K562 (cell line): ENCODE measurements at regions of chr14 and their contacts with region 1.

Region 1: DNA sequence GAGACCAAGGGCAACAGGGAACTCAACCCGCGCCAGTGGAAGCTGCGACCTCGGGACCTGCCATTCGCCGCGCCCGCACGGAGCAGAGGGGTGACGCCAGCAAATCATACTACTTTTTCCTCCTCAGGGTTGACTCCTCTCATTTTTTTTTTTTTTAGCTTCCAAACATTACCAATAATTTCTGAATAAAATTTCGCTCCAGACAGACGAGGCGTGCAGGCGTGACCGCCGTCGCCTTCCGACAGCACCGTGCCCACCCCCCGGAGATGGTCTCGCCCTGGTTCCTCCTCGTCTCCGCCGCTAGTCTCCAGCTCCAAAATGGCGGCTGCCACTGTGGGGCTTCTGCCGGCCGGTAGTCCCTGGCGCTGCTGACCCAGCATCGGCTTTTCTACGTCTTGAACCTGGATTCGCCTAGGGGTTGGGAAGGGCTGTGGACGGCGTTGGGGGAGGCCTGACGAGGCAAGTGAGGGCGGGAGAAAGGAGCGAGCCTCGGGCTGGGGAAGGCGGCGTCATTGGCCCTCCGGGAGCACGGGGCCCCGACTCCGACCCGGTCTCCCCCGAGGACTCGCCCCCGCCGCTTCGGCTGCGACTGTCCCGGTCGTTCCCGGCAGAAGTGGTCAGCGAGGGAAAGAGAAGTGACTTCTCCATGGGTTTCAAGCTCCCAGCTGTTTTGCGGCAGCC is at the starts of genes CPSF2 and NDUFB1:
- DNase-seq: peak; percentile 81 to 89 (median 84)
- ATAC-seq: peak; percentile 92
- H3K4me3 ChIP-seq: peak within 1 kb of the TSS; percentile 95
- H3K27ac ChIP-seq: peak within 1 kb of the TSS; percentile 99
- H3K4me1 ChIP-seq: peaks cover 10 to 12% of the 10 kb centered on the region in 2 experiments; a peak in 4 of 5 replicates
- H3K27me3 ChIP-seq: no peaks in the 10 kb centered on the region
- CTCF ChIP-seq: no peak
- EP300 ChIP-seq: no peak
- POLR2A ChIP-seq: peak; percentile 95
- RAD21 ChIP-seq: no peak
- polyA plus RNA-seq, gene CPSF2: 20.8 to 25.9 TPM
- polyA plus RNA-seq, gene NDUFB1: 410 to 431 TPM

Region 2: DNA sequence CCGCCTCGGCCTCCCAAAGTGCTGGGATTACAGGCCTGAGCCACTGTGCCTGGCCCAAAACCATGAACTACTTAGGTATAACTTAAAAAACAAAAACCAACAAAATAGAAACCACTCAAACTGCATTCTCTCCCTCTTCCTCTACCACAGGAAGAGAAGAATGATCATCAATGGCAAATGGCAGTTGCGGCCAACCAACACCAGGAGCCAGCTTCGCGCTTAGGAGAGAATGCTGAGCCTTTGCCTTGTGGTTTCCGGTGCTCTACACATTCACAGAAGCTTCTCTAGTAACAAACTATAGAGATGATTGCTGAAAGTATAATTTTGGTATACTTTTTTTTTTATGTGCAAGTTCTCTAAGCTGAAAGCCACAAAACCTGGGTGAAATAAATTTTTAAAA is 407.0 kb before region 1 on chr14:
- CTCF ChIA-PET with region 1: no interaction called
- POLR2A ChIA-PET with region 1: no interaction called
- in situ Hi-C with region 1: no loop called
- intact Hi-C with region 1: no loop called
- DNase-seq: no peak
- ATAC-seq: no peak
- H3K4me3 ChIP-seq: no peak overlapping the region
- H3K27ac ChIP-seq: no peak overlapping the region
- H3K4me1 ChIP-seq: no peaks in the 10 kb centered on the region
- H3K27me3 ChIP-seq: no peaks in the 10 kb centered on the region
- CTCF ChIP-seq: peak in 2 of 3 experiments; percentile 19 to 28; a peak in 2 of 6 replicates
- EP300 ChIP-seq: no peak
- POLR2A ChIP-seq: no peak
- RAD21 ChIP-seq: peak in 1 of 2 experiments; percentile 32; a peak in 2 of 4 replicates

Region 3: DNA sequence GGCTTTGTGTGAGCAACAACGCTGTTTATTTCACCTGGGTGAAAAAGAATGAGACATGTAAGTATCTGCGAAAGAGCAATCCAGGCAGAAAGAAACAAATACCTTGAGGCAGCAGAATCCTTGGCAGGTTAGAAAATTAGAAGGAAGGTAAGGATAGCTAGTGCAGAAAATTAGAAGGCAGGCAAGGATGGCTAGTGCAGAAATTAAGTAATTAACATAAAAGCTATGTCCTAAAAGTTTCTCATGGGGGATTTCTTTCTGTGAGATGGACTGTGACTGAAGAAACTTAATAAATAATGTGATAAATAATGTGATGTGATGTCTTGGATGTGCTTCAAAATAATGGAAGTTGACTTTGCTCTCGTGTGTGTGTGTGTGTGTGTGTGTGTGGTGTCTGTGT is 72.0 kb before region 1 on chr14:
- CTCF ChIA-PET with region 1: no interaction called
- POLR2A ChIA-PET with region 1: no interaction called
- in situ Hi-C with region 1: no loop called
- intact Hi-C with region 1: no loop called
- DNase-seq: no peak
- ATAC-seq: no peak
- H3K4me3 ChIP-seq: no peak overlapping the region
- H3K27ac ChIP-seq: no peak overlapping the region
- H3K4me1 ChIP-seq: no peaks in the 10 kb centered on the region
- H3K27me3 ChIP-seq: no peaks in the 10 kb centered on the region
- CTCF ChIP-seq: no peak
- EP300 ChIP-seq: no peak
- POLR2A ChIP-seq: no peak
- RAD21 ChIP-seq: no peak

Region 4: DNA sequence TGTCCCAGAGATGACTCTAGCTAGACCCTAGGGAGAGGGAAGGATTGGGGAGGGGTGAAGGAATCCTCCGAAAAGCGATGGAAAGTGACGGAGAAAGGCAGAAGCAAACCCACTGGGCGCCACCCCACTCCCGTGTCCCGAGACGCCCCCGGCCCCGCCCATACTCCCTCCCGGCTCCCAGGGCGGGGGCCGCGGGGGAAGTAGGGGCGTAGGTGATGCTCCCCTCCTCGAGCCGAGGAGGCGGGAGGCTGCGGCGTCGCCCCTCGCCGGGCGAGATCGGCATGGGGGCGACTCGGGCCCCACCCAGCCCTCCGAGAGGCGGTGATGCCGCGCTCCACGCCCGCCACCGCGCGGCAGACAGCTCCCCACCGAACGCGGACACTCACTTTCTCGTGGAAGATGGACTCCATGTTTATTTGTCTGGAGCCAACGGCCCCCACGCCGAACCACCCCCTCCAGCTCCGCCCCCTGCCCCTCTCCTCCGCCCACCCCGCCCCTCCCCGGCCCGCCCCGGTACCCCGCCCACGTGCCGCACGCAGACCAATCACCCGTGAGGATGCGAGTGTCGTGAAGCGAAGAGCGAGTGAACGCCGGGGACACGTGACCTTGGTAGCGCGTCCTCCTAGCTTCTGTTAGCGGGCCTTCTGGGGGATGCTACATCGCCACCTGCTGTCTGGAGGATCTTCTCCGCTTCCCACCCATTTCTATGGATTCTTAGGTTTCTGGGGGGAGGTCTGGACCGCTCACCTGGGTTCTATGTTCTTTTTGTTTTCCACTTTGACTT is 15.5 kb before region 1 on chr14 and contains the start of gene ATXN3:
- CTCF ChIA-PET with region 1: no interaction called
- POLR2A ChIA-PET with region 1: interaction called, 47 read pairs
- in situ Hi-C with region 1: no loop called
- intact Hi-C with region 1: no loop called
- DNase-seq: peak; percentile 96 to 97 (median 97)
- ATAC-seq: peak; percentile 91
- H3K4me3 ChIP-seq: peak within 1 kb of the TSS; percentile 87
- H3K27ac ChIP-seq: peak within 1 kb of the TSS; percentile 80
- H3K4me1 ChIP-seq: peaks cover 5 to 7% of the 10 kb centered on the region in 2 experiments; a peak in 4 of 5 replicates
- H3K27me3 ChIP-seq: no peaks in the 10 kb centered on the region
- CTCF ChIP-seq: peak; percentile 65 to 78 (median 71)
- EP300 ChIP-seq: no peak; the same call in 1 of the 2 replicates
- POLR2A ChIP-seq: peak; percentile 77
- RAD21 ChIP-seq: no peak
- polyA plus RNA-seq, gene ATXN3: 14.0 to 18.0 TPM

Region 5: GRCh38 chr14:92135267-92135666 is 13.5 kb after region 1 on chr14:
- CTCF ChIA-PET with region 1: no interaction called
- POLR2A ChIA-PET with region 1: interaction called, 26 read pairs
- in situ Hi-C with region 1: no loop called
- intact Hi-C with region 1: no loop called
- DNase-seq: peak in 3 of 4 experiments; percentile 9 to 17 (median 14)
- ATAC-seq: no peak
- H3K4me3 ChIP-seq: no peak overlapping the region
- H3K27ac ChIP-seq: no peak overlapping the region
- H3K4me1 ChIP-seq: no peaks in the 10 kb centered on the region
- H3K27me3 ChIP-seq: no peaks in the 10 kb centered on the region
- CTCF ChIP-seq: peak in 2 of 3 experiments; percentile 23 to 32; a peak in 2 of 6 replicates
- EP300 ChIP-seq: no peak
- POLR2A ChIP-seq: no peak
- RAD21 ChIP-seq: peak in 1 of 2 experiments; percentile 27; a peak in 3 of 4 replicates